ENCODE measurements at regions of chr1 and their contacts with region 1.

Region 1: GRCh38 chr1:8314346-8315280 is 3.3 kb upstream of the SLC45A1 start:
- DNase-seq: no peak
- H3K4me3 ChIP-seq: no peak overlapping the region
- H3K27me3 ChIP-seq: no peaks in the 10 kb centered on the region
- CTCF ChIP-seq: peak; percentile 89

Region 2: GRCh38 chr1:7975212-7975865 is 339.3 kb before region 1 on chr1:
- CTCF ChIA-PET with region 1: interaction called, 71 read pairs
- POLR2A ChIA-PET with region 1: no interaction called
- DNase-seq: no peak
- H3K4me3 ChIP-seq: no peak overlapping the region
- H3K27me3 ChIP-seq: no peaks in the 10 kb centered on the region
- CTCF ChIP-seq: peak; percentile 94

Region 3: DNA sequence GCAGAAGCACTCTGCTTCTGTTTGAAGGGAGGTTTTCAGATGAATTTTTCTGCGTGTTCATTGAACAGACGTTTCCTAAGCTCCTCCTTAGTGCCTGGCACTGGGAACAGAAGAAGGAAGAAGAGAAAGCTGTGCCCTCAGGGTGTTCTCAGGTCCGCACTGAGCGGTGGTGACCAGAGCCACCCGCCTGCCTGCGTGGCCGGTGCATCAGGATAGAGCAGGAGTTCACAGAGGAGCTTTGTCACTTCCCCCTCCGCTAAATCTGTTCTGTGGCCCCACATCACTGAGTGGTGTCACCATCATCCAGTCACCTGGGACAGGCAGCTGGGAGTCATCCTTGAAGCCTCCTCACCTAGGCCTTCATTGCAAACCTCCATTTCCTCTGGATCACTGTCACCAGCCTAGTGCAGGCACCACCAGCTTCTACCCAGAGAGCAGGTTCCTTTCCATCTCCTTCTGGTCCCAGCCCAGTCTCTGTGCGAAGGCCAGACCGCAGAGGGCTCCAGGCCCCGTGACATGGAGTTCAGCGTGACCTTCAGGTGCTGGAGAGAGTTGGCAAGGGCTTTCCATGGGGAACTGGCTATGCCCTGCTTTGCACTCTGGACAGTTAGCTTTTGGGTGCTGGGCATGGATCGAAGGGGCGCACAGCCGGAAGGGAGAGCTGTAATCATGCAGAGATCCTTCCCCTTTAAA is 331.4 kb before region 1 on chr1:
- CTCF ChIA-PET with region 1: interaction called, 71 read pairs
- POLR2A ChIA-PET with region 1: no interaction called
- DNase-seq: no peak
- H3K4me3 ChIP-seq: no peak overlapping the region
- H3K27me3 ChIP-seq: no peaks in the 10 kb centered on the region
- CTCF ChIP-seq: no peak

Region 4: DNA sequence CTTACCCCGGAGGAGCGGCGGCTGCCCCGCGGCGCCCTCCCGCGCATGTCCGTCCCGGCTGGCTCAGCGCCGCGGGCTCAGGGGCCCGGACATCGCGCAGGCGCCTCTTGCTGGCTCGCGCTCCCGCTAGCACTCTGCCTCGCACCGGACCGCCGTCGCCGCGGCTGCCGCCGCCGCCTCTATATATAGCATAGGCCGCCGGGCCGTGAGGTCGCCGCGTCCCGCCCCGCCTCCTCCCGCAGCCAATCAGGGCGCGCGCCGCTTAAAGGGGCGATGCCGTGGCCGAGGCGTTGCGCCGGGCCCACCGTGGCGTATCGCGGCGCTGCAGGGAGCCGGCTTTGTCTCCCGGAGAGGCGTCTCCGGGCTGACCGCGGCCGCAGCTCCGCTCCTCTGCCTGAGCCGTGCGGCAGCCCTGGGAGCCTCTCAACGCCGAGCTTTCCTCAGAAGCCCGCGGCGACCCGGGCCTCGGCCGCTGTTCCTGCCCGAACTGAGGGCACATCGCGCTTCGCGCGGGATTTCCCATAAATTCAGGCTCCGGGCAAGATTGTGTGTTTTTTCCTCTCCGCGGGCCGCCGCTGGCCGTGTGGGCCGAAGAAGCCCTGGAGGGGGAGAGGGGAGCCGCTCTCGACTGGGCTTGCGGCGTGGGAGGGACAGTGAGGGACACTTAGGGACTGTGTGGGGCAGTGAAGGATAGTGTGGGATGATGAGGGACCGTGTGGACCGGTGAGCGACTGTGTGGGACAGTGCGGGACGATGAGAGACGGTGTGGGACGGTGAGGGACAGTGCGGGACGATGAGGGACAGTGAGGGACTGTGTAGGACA is 288.2 kb before region 1 on chr1 and contains the start of gene ERRFI1:
- CTCF ChIA-PET with region 1: interaction called, 40 read pairs
- POLR2A ChIA-PET with region 1: no interaction called
- DNase-seq: no peak
- H3K4me3 ChIP-seq: peak within 1 kb of the TSS; percentile 68
- H3K27me3 ChIP-seq: no peaks in the 10 kb centered on the region
- CTCF ChIP-seq: no peak
- polyA plus RNA-seq, gene ERRFI1: 20.5 and 30.3 TPM in 2 replicates

Region 5: DNA sequence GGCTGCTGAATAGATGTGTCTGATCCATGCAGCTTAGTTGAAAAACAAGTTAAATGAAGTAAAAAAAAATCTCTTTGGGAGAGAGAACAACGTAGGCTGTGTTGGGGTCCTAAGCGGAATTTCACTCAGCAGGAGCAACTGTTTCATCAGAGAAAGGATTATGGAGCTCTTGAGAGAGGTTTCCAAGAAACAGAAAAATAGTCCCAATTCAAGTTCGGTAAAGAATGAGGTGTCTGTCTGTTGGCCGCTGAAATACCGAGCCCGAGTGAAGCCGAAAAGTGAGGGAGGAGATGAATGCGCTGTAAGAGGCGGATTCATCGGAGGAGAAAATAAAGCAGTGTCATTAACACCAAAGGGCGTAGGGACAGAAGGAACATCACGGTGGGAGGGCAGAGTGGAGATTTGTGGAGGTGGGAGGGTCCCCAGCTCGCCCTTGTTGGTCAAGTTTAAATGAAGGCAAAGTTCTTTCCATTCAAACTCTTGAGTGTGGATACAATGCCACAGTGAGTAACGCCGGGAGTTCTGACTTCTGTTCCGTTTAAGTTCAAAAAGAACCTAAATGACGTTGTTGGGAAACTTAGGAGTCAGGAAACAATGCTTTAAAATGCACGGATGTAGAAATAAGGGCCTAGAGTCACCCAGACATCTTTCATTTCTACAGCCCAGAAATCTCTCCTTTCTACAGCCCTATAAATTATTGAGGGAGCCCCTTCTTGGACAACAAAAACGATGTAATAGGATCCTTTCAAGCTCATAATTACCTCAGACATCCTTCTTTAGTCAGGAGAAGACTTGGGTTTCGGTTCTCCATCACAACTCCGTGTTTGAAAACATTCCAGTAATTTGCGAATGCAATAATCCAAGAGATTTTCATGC is 12.3 kb before region 1 on chr1:
- CTCF ChIA-PET with region 1: interaction called, 11 read pairs
- POLR2A ChIA-PET with region 1: no interaction called
- DNase-seq: no peak
- H3K4me3 ChIP-seq: no peak overlapping the region
- H3K27me3 ChIP-seq: no peaks in the 10 kb centered on the region; the same call in 1 of the 2 replicates
- CTCF ChIP-seq: no peak

Region 6: DNA sequence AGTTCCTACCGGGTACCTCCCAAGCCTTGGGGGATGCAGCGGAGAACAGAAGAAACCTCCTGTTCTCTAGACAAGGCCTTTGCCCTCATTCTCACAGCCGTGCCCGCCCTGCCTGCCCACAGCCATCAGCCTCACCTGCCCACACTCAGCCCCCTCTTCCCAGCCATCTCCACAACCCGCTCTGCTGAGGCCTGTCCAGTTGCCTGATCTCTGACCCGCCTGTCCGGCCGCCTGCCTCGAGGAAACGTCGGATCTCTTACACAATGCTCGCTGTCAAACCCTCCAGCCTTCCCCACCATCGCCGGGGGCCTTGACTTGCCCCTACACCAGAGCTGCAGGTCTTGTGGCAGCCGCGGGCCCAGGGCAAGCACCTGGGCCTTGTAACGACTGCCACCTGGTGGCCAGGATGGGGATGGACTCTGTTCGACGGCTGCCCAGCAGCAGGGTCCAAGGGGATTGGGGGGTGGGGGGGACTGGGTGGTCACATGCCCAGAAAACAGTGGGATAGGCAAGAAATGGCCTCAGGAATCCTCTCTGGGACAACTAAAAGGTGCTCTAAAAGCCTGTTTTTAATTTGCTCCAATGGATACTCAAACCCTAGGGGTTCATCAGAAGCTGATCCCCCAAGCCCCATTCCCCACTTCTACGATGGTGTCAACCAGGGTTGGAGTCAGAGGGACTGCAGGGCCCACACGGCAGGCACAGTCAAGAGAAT is 34.3 kb after region 1 on chr1:
- CTCF ChIA-PET with region 1: interaction called, 15 read pairs
- POLR2A ChIA-PET with region 1: no interaction called
- DNase-seq: no peak
- H3K4me3 ChIP-seq: no peak overlapping the region
- H3K27me3 ChIP-seq: no peaks in the 10 kb centered on the region; the same call in 1 of the 2 replicates
- CTCF ChIP-seq: peak; percentile 90

Measured in BJ (cell line).